ENCODE measurements at regions of chr1 and their contacts with region 1.

Region 1: GRCh38 chr1:146036965-146037646 is 15.6 kb upstream of the HJV start:
- DNase-seq: peak; percentile 87
- ATAC-seq: peak; percentile 62
- H3K4me3 ChIP-seq: peak overlapping the region; percentile 90
- H3K27ac ChIP-seq: peak overlapping the region; percentile 79
- H3K4me1 ChIP-seq: no peaks in the 10 kb centered on the region; the same call in 1 of the 2 replicates
- H3K27me3 ChIP-seq: no peaks in the 10 kb centered on the region
- CTCF ChIP-seq: no peak
- EP300 ChIP-seq: peak in 1 of 2 experiments; percentile 77; a peak in 1 of 4 replicates
- POLR2A ChIP-seq: peak; percentile 15; the same call in 1 of the 2 replicates
- RAD21 ChIP-seq: no peak

Region 2: DNA sequence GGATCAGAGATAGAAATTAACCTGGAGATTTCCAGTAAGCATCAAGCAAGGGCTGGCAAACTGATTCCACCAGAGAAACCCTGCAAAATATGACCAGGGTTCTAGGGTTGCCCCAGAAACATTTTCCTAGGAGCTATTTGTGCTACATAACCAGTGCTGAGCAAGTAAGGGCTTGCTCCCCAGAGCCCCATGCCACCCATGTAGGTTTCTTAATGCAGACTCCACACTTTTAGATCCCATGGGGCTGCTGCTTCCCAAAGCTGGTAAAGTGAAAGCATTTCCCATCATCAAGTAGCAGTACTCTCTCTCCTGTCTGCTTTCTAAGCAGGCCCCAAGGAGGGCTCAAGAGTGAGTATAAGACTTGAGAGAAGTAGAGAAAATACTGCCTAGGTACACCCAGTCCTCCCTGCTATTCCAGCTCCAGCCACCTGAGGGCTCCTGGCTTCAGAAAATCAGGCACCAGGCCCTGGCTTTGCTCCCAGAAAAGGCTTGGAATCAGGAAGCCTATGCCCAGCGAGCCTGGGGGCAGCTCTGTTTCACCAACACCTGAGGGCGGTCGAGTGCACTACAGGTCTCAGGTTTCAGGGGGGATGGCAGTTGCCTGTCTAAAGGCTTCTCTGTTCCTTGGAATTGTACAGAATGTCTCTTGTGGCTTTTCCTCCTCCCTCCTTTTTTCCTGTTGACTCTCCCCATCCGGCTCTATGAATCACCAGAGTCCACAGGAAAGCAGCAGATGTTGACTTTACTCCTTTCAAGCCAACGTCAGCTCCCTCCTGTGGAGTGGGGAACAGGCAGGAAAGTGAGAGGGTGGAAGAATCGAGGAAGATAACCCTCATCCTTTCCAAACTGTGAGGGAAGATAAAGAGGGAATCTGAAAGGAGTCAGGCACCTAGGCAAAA is 145.3 kb before region 1 on chr1:
- CTCF ChIA-PET with region 1: interaction called, 10 read pairs
- POLR2A ChIA-PET with region 1: no interaction called
- RAD21 ChIA-PET with region 1: no interaction called
- SMC1A ChIA-PET with region 1: interaction called, 4 read pairs
- in situ Hi-C with region 1: no loop called
- intact Hi-C with region 1: no loop called
- DNase-seq: no peak
- ATAC-seq: peak; percentile 95
- H3K4me3 ChIP-seq: no peak overlapping the region
- H3K27ac ChIP-seq: no peak overlapping the region
- H3K4me1 ChIP-seq: no peaks in the 10 kb centered on the region
- H3K27me3 ChIP-seq: no peaks in the 10 kb centered on the region
- CTCF ChIP-seq: peak; percentile 89 to 90 (median 90)
- EP300 ChIP-seq: no peak
- POLR2A ChIP-seq: no peak
- RAD21 ChIP-seq: peak; percentile 81

Region 3: DNA sequence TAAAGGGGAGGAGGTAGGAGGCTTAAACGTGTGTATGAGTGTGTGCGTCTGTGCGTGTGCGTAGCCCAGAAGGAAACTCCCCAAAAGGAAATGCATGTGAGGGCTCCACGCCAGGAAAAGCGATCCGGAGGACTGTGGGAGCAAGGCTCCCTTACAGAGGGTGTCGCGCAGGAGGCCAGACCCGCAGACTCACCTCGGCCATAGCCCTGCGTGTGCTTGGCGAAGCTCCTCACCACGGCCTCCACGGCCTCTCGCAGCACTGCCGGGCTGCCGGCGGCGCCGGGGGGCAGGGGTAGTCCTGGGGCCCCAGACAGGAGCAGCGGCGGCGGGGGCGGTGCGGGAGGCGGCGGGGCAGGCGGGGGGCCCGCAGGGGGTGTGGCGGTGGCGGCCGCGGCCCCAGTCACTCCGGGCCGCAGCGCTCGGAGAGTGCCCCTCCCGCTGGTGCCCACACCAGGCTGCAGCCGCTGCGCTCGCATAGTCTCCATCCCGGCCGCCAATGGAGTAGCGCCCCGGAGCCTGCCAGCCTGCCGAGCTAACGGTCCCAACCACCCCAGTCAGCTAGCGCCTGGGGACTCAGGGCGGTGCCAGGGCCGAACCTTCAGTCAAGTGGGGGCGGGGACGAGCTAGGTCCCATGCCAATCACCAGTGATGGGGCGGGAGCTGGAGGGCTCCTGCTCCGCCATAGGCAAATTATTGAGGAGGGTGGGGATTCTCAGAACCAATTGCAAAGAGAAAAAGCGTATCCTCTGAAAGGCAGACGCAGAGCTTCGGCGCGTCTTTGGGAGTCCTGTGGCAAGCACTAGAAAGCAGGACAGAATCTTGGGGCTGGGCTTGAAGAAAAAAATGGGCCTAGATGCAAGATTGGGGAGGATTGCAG is 79.4 kb before region 1 on chr1 and contains the start of gene LIX1L:
- CTCF ChIA-PET with region 1: interaction called, 9 read pairs
- POLR2A ChIA-PET with region 1: interaction called, 18 read pairs
- RAD21 ChIA-PET with region 1: interaction called, 10 read pairs
- SMC1A ChIA-PET with region 1: interaction called, 15 read pairs
- in situ Hi-C with region 1: no loop called
- intact Hi-C with region 1: loop called (anchors 5 kb)
- DNase-seq: peak; percentile 89
- ATAC-seq: peak; percentile 90
- H3K4me3 ChIP-seq: peak within 1 kb of the TSS; percentile 78
- H3K27ac ChIP-seq: peak within 1 kb of the TSS; percentile 73
- H3K4me1 ChIP-seq: peaks cover 8% of the 10 kb centered on the region
- H3K27me3 ChIP-seq: no peaks in the 10 kb centered on the region; a peak in 1 of 4 replicates
- CTCF ChIP-seq: no peak
- EP300 ChIP-seq: no peak
- POLR2A ChIP-seq: peak; percentile 86
- RAD21 ChIP-seq: no peak
- polyA plus RNA-seq, gene LIX1L: 5.5 to 12.2 TPM

Region 4: GRCh38 chr1:145963995-145964901 is 72.9 kb before region 1 on chr1 and contains the starts of genes ANKRD34A and POLR3GL:
- CTCF ChIA-PET with region 1: no interaction called
- POLR2A ChIA-PET with region 1: interaction called, 15 read pairs
- RAD21 ChIA-PET with region 1: interaction called, 4 read pairs
- SMC1A ChIA-PET with region 1: interaction called, 15 read pairs
- in situ Hi-C with region 1: no loop called
- intact Hi-C with region 1: loop called (anchors 5 kb)
- DNase-seq: peak; percentile 80
- ATAC-seq: peak; percentile 95
- H3K4me3 ChIP-seq: peak within 1 kb of the TSS; percentile 79
- H3K27ac ChIP-seq: peak within 1 kb of the TSS; percentile 73
- H3K4me1 ChIP-seq: peaks cover 19% of the 10 kb centered on the region
- H3K27me3 ChIP-seq: no peaks in the 10 kb centered on the region; a peak in 1 of 4 replicates
- CTCF ChIP-seq: no peak
- EP300 ChIP-seq: no peak
- POLR2A ChIP-seq: peak; percentile 98
- RAD21 ChIP-seq: no peak
- polyA plus RNA-seq, gene ANKRD34A: 0.40 to 0.42 TPM
- polyA plus RNA-seq, gene POLR3GL: 12.8 to 25.5 TPM

Region 5: DNA sequence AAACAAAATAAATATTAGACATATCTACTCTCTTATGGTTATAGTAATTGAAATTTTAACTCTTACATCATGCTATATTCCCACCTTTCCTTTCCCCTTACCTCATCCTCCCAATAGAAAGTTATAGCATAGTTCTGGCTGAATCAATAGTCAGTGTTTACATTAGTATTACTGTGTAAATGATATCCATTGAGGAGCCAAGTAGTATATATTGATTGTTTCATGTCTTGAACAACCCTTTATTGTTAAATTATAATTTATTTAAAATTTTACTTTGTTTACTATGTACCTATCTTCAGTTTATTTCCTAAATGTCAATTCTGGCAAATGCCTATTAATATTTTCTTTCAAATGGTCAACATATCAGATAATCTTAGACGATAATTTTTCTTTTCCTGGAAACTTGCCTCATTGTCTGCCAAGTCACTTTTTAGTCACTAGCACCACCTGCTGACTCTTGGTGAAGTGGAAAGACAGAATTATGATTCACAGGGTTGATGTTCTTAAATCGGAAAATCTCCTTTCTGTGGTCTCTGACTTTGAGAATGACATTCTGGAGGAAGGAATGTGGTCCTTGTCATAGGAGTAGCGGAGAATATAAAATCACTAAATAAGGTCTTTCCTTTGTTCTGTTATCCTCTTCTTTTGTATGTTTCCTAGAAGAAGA is 24.2 kb before region 1 on chr1:
- CTCF ChIA-PET with region 1: interaction called, 10 read pairs
- POLR2A ChIA-PET with region 1: interaction called, 4 read pairs
- RAD21 ChIA-PET with region 1: interaction called, 8 read pairs
- SMC1A ChIA-PET with region 1: interaction called, 13 read pairs
- in situ Hi-C with region 1: no loop called
- intact Hi-C with region 1: no loop called
- DNase-seq: no peak
- ATAC-seq: peak; percentile 84
- H3K4me3 ChIP-seq: no peak overlapping the region
- H3K27ac ChIP-seq: no peak overlapping the region
- H3K4me1 ChIP-seq: no peaks in the 10 kb centered on the region
- H3K27me3 ChIP-seq: peaks cover 0 to 1% of the 10 kb centered on the region in 2 experiments; a peak in 3 of 4 replicates
- CTCF ChIP-seq: peak; percentile 68 to 89 (median 76); a peak in 5 of 6 replicates
- EP300 ChIP-seq: no peak
- POLR2A ChIP-seq: no peak
- RAD21 ChIP-seq: peak; percentile 98

Region 6: GRCh38 chr1:146019231-146020057 is 17.7 kb before region 1 on chr1:
- CTCF ChIA-PET with region 1: interaction called, 16 read pairs
- POLR2A ChIA-PET with region 1: no interaction called
- RAD21 ChIA-PET with region 1: interaction called, 4 read pairs
- SMC1A ChIA-PET with region 1: interaction called, 21 read pairs
- in situ Hi-C with region 1: no loop called
- intact Hi-C with region 1: no loop called
- DNase-seq: no peak
- ATAC-seq: no peak
- H3K4me3 ChIP-seq: no peak overlapping the region
- H3K27ac ChIP-seq: no peak overlapping the region
- H3K4me1 ChIP-seq: no peaks in the 10 kb centered on the region
- H3K27me3 ChIP-seq: peaks cover 4 to 8% of the 10 kb centered on the region in 2 experiments; a peak in 3 of 4 replicates
- CTCF ChIP-seq: no peak
- EP300 ChIP-seq: no peak
- POLR2A ChIP-seq: no peak
- RAD21 ChIP-seq: no peak

Region 7: DNA sequence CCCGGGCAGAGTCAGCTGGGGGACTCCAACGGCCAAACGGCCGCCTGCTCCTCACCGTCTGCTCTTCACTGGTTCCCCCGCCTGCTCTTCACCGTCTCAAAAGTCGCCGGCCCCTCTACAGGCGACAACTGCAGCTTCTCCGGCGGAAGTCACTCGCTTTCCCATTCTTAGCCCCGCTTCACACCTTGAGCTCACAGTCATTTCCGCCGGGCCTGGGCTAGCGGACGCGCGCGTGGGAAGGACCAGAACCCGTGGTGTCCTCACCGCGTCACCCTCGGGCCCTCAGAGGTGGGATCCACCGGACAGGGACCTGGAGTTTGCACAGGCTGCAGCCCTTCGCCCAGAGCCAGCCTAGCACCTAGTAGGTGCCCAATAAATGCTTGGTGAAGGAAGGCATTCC is 12.3 kb after region 1 on chr1:
- CTCF ChIA-PET with region 1: interaction called, 13 read pairs
- POLR2A ChIA-PET with region 1: interaction called, 18 read pairs
- RAD21 ChIA-PET with region 1: interaction called, 18 read pairs
- SMC1A ChIA-PET with region 1: interaction called, 15 read pairs
- in situ Hi-C with region 1: no loop called
- intact Hi-C with region 1: loop called (anchors 2 kb)
- DNase-seq: no peak
- ATAC-seq: no peak
- H3K4me3 ChIP-seq: no peak overlapping the region
- H3K27ac ChIP-seq: no peak overlapping the region
- H3K4me1 ChIP-seq: no peaks in the 10 kb centered on the region; the same call in 1 of the 2 replicates
- H3K27me3 ChIP-seq: no peaks in the 10 kb centered on the region
- CTCF ChIP-seq: no peak
- EP300 ChIP-seq: no peak
- POLR2A ChIP-seq: no peak
- RAD21 ChIP-seq: no peak